ENCODE measurements at regions of chr15 and their contacts with region 1.

Region 1: DNA sequence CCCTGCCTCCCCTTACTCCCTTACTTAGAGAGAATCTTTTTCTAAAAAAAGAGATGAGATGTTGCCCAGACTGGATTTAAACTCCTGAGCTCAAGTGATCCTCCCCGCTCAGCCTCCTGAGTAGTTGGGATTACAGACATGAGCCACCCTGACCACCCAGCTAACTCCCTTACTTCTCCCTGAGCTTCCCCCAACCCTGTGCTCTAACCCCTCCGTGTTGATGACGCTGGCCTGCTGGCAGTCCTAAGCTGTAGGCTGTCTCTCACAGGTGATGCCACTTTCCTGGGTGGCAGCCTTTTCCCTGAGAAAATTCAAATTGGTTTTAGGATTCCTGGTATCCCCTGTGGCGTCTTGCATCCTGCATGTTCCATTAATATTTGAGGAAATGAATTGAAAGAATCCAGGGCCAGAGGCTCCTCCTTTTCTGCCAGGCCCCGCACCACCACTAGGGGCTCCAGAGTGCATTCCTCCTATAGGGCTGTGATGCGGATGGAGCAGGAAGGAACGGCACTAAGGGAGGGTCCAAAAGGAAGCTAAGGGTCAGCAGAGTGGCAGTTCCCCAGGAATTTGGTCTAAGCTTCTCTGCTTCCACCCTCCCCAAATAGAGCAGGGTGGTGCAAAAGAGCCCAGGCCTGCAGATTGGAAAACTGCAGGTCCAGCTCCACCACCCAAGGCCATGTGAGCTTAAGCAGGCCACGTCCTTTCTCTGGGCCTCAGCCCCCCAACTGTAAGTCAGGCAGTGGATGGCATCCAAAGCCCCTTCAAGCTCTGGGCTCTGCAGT is 101.1 kb downstream of the DAPK2 start:
- H3K4me3 ChIP-seq: no peak overlapping the region
- H3K27ac ChIP-seq: no peak overlapping the region
- H3K4me1 ChIP-seq: no peaks in the 10 kb centered on the region
- CTCF ChIP-seq: peak; percentile 37; the same call in 1 of the 2 replicates

Region 2: DNA sequence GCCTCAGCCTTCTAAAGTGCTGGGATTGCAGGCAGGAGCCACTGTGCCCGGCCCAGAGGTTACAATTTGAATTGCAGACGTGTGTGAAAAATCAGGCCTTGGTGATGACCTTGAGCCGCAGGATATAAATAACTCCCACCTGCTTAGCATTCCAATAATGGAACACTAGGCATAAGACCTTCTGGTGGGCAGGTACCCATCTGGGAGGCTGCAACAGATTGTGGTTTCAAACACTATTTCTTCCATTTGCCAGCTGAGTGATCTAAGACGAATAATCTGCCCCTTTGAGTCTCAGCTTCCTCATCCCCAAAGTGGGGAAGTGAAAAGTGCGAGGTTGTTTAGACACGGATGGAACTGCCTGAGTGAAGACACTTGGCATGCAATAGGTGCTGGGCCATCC is 63.8 kb before region 1 on chr15:
- CTCF ChIA-PET with region 1: no interaction called
- POLR2A ChIA-PET with region 1: no interaction called
- H3K4me3 ChIP-seq: no peak overlapping the region
- H3K27ac ChIP-seq: no peak overlapping the region
- H3K4me1 ChIP-seq: no peaks in the 10 kb centered on the region
- CTCF ChIP-seq: no peak

Region 3: DNA sequence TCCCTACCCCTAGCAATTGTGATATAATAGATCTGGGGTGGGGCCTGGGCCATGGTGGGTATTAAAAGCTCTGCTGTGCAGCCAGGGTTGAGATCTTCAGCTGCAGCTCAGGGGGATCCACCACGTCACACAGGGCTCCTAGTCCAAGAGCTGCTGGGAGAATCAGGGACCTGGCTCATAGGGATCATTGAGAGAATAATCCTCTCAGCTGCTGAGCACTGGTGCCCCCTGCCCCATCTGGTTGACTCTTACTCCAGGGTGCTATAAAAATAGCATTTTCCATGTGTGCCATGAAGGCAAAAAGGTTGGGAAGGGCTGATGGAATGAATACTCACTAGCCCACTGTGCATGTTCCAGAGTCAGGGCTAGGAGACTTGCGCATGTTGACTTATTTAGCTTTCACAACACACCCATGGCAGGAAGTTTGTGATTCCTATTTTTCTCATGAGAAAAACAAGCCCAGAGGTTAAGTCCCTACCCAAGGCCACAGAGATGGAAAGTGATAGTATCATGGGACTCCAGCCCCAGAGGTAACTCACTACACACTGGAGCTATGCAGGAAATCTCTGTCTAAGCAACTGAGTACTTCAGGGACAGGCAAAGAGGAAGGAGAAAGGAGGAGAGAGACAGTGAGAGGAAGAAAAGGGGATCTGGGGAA is 16.9 kb before region 1 on chr15:
- CTCF ChIA-PET with region 1: interaction called, 17 read pairs
- POLR2A ChIA-PET with region 1: no interaction called
- H3K4me3 ChIP-seq: no peak overlapping the region
- H3K27ac ChIP-seq: no peak overlapping the region
- H3K4me1 ChIP-seq: no peaks in the 10 kb centered on the region
- CTCF ChIP-seq: no peak

Region 4: GRCh38 chr15:63933522-63933921 is 11.7 kb before region 1 on chr15:
- CTCF ChIA-PET with region 1: interaction called, 17 read pairs
- POLR2A ChIA-PET with region 1: no interaction called
- H3K4me3 ChIP-seq: no peak overlapping the region
- H3K27ac ChIP-seq: no peak overlapping the region
- H3K4me1 ChIP-seq: no peaks in the 10 kb centered on the region
- CTCF ChIP-seq: no peak

Region 5: GRCh38 chr15:64004582-64004981 is 59.4 kb after region 1 on chr15:
- CTCF ChIA-PET with region 1: interaction called, 20 read pairs
- POLR2A ChIA-PET with region 1: no interaction called
- H3K4me3 ChIP-seq: no peak overlapping the region
- H3K27ac ChIP-seq: no peak overlapping the region
- H3K4me1 ChIP-seq: no peaks in the 10 kb centered on the region
- CTCF ChIP-seq: no peak

Region 6: GRCh38 chr15:64046347-64047153 is 101.4 kb after region 1 on chr15 and contains the start of gene DAPK2:
- CTCF ChIA-PET with region 1: interaction called, 19 read pairs
- POLR2A ChIA-PET with region 1: no interaction called
- H3K4me3 ChIP-seq: peak within 1 kb of the TSS; percentile 36
- H3K27ac ChIP-seq: no peak within 1 kb of the TSS; the same call in 1 of the 2 replicates
- H3K4me1 ChIP-seq: 0 out of 2 replicates have a peak, but pooled peaks cover 3% of the 10 kb centered on the region
- CTCF ChIP-seq: peak; percentile 31; the same call in 1 of the 2 replicates